GM10248 (cell line): ENCODE measurements at regions of chr2 and their contacts with region 1.

Region 1: GRCh38 chr2:102922321-102922720 is 160.5 kb downstream of the TMEM182 start:
- DNase-seq: no peak
- CTCF ChIP-seq: no peak

Region 2: DNA sequence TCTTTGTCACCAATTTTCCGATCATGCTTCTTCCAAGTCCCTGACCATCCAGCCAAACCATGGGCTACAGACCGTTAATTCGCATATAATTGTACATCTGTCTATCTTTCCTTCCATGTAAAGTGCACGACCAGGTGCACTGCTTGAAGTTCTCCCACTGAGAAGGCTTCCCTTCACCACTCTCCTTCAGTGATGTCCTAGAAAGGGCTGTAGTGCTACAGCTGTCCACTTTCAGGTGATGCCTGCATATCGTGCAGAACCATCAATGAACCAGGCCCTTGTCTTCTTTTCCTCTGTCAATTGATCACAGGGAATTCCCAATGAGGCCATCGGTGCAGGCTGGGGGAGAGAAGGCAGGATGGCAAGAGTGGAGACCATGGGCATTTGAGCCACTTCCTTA is 11.6 kb before region 1 on chr2:
- CTCF ChIA-PET with region 1: interaction called, 11 read pairs
- POLR2A ChIA-PET with region 1: no interaction called
- DNase-seq: no peak
- CTCF ChIP-seq: no peak